HepG2 (cell line): ENCODE measurements at regions of chr6 and their contacts with region 1.

Region 1: GRCh38 chr6:27893059-27893835 is 18.9 kb downstream of the OR2B2 start:
- DNase-seq: peak; percentile 99
- ATAC-seq: peak; percentile 70
- H3K4me3 ChIP-seq: peak overlapping the region; percentile 76 to 85 (median 82)
- H3K27ac ChIP-seq: peak overlapping the region; percentile 96
- H3K4me1 ChIP-seq: peaks cover 45% of the 10 kb centered on the region
- H3K27me3 ChIP-seq: no peaks in the 10 kb centered on the region; a peak in 1 of 5 replicates
- CTCF ChIP-seq: peak; percentile 39; the same call in 1 of the 2 replicates
- EP300 ChIP-seq: peak; percentile 41 to 53; a peak in 2 of 4 replicates
- POLR2A ChIP-seq: peak; percentile 98 to 99
- RAD21 ChIP-seq: peak; percentile 52; the same call in 1 of the 2 replicates

Region 2: DNA sequence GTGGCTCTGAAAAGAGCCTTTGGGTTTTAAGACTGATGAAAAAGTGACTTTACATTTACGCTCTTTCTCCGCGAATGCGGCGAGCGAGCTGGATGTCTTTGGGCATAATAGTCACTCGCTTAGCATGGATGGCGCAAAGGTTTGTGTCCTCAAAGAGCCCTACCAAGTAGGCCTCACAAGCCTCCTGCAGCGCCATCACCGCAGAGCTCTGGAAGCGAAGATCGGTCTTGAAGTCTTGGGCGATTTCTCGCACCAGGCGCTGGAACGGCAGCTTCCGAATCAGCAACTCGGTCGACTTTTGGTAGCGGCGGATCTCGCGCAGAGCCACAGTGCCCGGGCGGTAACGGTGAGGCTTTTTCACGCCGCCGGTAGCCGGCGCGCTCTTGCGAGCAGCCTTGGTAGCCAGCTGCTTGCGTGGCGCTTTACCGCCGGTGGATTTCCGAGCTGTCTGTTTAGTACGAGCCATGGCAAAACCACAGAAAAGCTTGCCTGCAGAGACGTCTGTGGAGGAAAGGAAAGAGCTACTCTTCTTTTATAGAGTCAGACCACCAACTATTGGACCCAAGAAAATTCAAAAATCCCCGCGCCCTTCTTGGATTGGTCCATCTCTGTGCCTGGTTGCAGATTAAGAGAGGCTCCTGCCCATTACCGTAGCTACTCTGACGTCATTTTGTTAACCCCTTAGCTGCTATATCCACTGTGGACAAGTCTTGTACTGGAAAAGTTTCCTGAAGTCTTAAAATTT is 1861.5 kb before region 1 on chr6:
- CTCF ChIA-PET with region 1: no interaction called
- POLR2A ChIA-PET with region 1: interaction called, 12 read pairs
- in situ Hi-C with region 1: no loop called
- intact Hi-C with region 1: no loop called
- DNase-seq: peak; percentile 100
- ATAC-seq: peak; percentile 79
- H3K4me3 ChIP-seq: peak overlapping the region; percentile 71 to 83 (median 82)
- H3K27ac ChIP-seq: peak overlapping the region; percentile 93
- H3K4me1 ChIP-seq: peaks cover 37% of the 10 kb centered on the region
- H3K27me3 ChIP-seq: no peaks in the 10 kb centered on the region; a peak in 1 of 5 replicates
- CTCF ChIP-seq: peak; percentile 52
- EP300 ChIP-seq: peak; percentile 40 to 80; a peak in 2 of 4 replicates
- POLR2A ChIP-seq: peak; percentile 99
- RAD21 ChIP-seq: peak; percentile 61

Region 3: DNA sequence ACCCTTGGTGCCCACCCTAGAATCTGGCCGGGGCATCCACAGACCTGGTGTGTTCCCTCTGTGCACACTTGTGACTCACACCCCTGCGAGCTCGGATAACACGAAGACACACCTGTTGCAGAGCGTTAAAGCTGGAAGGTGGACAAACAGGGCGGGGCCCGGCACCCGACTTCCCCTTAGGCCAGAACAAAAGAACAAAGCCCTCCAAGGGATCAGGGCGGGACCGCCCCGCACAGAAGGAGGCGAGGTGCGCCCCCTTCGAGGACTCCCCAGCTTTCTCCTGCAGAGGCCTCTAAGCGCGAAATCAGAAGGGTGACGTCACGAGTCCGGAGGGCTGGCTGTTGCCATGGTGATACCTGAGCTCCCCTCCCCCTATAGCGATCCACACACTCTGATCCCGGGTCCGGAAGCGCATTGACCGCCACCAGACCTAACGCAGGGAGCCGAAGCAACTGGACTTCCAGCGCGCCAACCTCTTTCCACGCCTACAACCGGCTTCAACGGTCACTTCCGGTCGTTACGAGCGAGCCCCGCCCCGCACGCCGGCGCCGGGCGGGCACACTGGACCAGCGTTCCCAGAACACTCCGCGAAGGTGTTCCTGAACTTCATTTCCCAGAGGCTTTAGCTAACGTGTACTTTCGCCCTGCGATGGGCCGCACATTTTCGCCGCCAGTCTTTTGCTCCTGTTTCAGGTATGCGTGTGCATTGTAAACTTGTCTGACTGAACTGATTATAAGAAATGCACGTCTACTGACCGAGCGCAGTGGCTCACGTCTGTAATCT is 420.4 kb before region 1 on chr6 and contains the start of gene ZNF184:
- CTCF ChIA-PET with region 1: no interaction called
- POLR2A ChIA-PET with region 1: interaction called, 6 read pairs
- in situ Hi-C with region 1: no loop called
- intact Hi-C with region 1: loop called (anchors 2 kb)
- DNase-seq: peak; percentile 99
- ATAC-seq: peak; percentile 96
- H3K4me3 ChIP-seq: peak within 1 kb of the TSS; percentile 80 to 89 (median 84)
- H3K27ac ChIP-seq: peak within 1 kb of the TSS; percentile 91
- H3K4me1 ChIP-seq: peaks cover 33% of the 10 kb centered on the region
- H3K27me3 ChIP-seq: no peaks in the 10 kb centered on the region; a peak in 1 of 5 replicates
- CTCF ChIP-seq: peak; percentile 54
- EP300 ChIP-seq: no peak; a peak in 4 of 4 replicates
- POLR2A ChIP-seq: peak; percentile 85 to 93
- RAD21 ChIP-seq: no peak
- total RNA-seq, gene ZNF184: 10.1 and 16.3 TPM in 2 replicates

Region 4: GRCh38 chr6:27772261-27773001 is 120.8 kb before region 1 on chr6:
- CTCF ChIA-PET with region 1: interaction called, 29 read pairs
- POLR2A ChIA-PET with region 1: interaction called, 27 read pairs
- in situ Hi-C with region 1: no loop called
- intact Hi-C with region 1: loop called (anchors 1 kb)
- DNase-seq: peak; percentile 81
- ATAC-seq: peak; percentile 96
- H3K4me3 ChIP-seq: peak overlapping the region; percentile 11 to 60 (median 19); a peak in 4 of 6 replicates
- H3K27ac ChIP-seq: peak overlapping the region; percentile 56
- H3K4me1 ChIP-seq: peaks cover 27% of the 10 kb centered on the region
- H3K27me3 ChIP-seq: no peaks in the 10 kb centered on the region; a peak in 1 of 5 replicates
- CTCF ChIP-seq: peak; percentile 99
- EP300 ChIP-seq: 0 out of 4 replicates have a peak, but pooled peaks of 1 of the 2 experiments have one; percentile 26
- POLR2A ChIP-seq: no peak
- RAD21 ChIP-seq: peak; percentile 96

Region 5: DNA sequence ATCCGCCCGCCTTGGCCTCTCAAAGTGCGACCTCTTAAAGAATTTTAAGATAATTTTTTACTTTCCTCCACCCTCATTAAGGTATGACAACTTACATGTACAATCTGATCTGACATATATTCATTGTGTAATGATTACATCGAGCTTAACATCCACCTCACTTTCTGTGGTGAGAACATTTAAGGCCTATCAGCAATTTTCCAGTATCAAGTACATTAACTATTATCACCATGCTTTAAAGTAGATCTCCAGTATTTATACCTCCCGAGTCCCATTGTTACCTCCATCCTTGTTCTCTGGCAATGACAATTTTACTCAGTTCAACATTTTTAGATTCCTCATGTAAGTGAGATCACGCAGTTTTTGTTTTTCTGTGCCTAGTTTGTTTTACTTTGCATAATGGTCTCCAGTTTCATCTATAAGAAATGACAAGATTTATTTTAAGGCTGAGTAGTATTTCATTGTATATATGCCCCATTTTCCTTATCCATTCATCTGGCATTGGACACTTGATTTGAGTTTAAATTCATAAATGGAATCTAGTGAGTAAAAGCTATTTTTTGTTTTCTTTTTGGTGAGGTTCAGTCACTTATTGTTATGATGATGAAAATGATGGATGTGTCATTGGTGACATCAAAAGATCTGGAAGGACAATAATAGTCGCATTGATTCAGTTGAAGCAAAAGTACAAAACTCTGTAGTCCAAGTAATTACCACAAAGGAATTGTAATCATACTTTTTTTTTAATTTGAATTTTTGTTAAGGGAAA is 68.0 kb before region 1 on chr6:
- CTCF ChIA-PET with region 1: interaction called, 9 read pairs
- POLR2A ChIA-PET with region 1: interaction called, 55 read pairs
- in situ Hi-C with region 1: no loop called
- intact Hi-C with region 1: no loop called
- DNase-seq: no peak
- ATAC-seq: peak; percentile 11; the same call in 2 of the 3 replicates
- H3K4me3 ChIP-seq: peak overlapping the region; percentile 66 to 88 (median 75)
- H3K27ac ChIP-seq: peak overlapping the region; percentile 78
- H3K4me1 ChIP-seq: peaks cover 33% of the 10 kb centered on the region
- H3K27me3 ChIP-seq: no peaks in the 10 kb centered on the region; a peak in 1 of 5 replicates
- CTCF ChIP-seq: no peak
- EP300 ChIP-seq: no peak
- POLR2A ChIP-seq: no peak
- RAD21 ChIP-seq: no peak

Region 6: GRCh38 chr6:27873021-27873940 is 20.0 kb before region 1 on chr6:
- CTCF ChIA-PET with region 1: no interaction called
- POLR2A ChIA-PET with region 1: interaction called, 74 read pairs
- in situ Hi-C with region 1: no loop called
- intact Hi-C with region 1: no loop called
- DNase-seq: no peak
- ATAC-seq: no peak
- H3K4me3 ChIP-seq: no peak overlapping the region
- H3K27ac ChIP-seq: no peak overlapping the region
- H3K4me1 ChIP-seq: no peaks in the 10 kb centered on the region
- H3K27me3 ChIP-seq: peaks cover 0 to 18% of the 10 kb centered on the region in 2 experiments; a peak in 2 of 5 replicates
- CTCF ChIP-seq: no peak
- EP300 ChIP-seq: no peak
- POLR2A ChIP-seq: no peak
- RAD21 ChIP-seq: no peak